GM12878 (cell line): ENCODE measurements at regions of chr2 and their contacts with region 1.

Region 1: DNA sequence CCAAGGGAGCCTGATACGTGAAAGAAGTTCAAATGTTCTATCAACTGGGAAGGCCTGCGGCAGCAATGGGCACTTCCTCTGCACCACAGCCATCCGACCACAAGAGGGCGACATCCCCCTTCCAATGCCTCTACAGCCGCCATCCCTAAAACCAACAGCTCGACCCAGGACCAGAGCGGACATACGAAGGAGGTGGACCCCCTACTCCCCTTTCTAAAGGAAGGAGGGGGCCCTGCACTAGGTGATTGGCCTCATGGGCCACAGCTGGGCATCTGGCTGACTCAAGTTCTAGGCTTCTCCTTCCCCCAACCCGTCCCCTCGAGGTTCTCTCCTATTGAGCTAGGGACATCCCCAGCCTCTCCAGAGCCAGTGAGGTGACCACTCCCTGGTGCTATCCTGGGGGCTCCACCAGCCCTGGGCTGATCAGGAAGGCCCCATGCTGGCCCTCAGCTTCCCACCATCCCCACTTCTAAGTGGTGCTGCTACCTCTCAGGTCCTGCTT is 217.2 kb downstream of the TNS1 start:
- DNase-seq: no peak
- ATAC-seq: peak; percentile 88
- H3K4me3 ChIP-seq: no peak overlapping the region
- H3K27ac ChIP-seq: no peak overlapping the region
- H3K4me1 ChIP-seq: peaks cover 3% of the 10 kb centered on the region; the same call in 1 of the 2 replicates
- H3K27me3 ChIP-seq: no peaks in the 10 kb centered on the region
- CTCF ChIP-seq: peak; percentile 95 to 98 (median 96)
- EP300 ChIP-seq: no peak
- POLR2A ChIP-seq: no peak
- RAD21 ChIP-seq: peak; percentile 85

Region 2: DNA sequence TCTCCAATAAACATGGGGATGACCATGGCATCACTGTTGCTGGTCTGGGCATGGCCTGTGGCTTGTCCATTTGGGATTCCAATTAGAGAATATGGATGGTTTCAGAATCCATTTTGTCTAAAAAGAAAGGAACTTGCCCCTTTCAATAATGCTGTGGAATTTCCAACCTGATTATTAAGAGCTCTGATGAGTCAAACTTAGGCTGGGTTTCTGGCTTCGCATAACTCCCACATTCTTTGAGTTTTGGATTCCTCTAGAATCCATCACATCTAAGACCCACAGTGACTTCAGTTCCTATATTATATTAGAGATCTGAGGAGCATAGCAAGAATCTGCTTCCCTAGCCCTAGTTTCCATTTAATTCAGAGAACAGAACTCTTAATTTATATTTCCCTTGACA is 314.3 kb before region 1 on chr2:
- CTCF ChIA-PET with region 1: no interaction called
- POLR2A ChIA-PET with region 1: no interaction called
- RAD21 ChIA-PET with region 1: no interaction called
- SMC1A ChIA-PET with region 1: no interaction called
- in situ Hi-C with region 1: no loop called
- intact Hi-C with region 1: no loop called
- DNase-seq: no peak
- ATAC-seq: no peak
- H3K4me3 ChIP-seq: no peak overlapping the region
- H3K27ac ChIP-seq: no peak overlapping the region
- H3K4me1 ChIP-seq: peaks cover 6% of the 10 kb centered on the region
- H3K27me3 ChIP-seq: no peaks in the 10 kb centered on the region; a peak in 2 of 4 replicates
- CTCF ChIP-seq: no peak
- EP300 ChIP-seq: no peak
- POLR2A ChIP-seq: no peak
- RAD21 ChIP-seq: no peak

Region 3: GRCh38 chr2:217643789-217644301 is 141.8 kb before region 1 on chr2:
- CTCF ChIA-PET with region 1: no interaction called
- POLR2A ChIA-PET with region 1: no interaction called
- RAD21 ChIA-PET with region 1: no interaction called
- SMC1A ChIA-PET with region 1: no interaction called
- in situ Hi-C with region 1: no loop called
- intact Hi-C with region 1: no loop called
- DNase-seq: no peak
- ATAC-seq: no peak
- H3K4me3 ChIP-seq: no peak overlapping the region
- H3K27ac ChIP-seq: no peak overlapping the region
- H3K4me1 ChIP-seq: no peaks in the 10 kb centered on the region
- H3K27me3 ChIP-seq: no peaks in the 10 kb centered on the region; a peak in 1 of 4 replicates
- CTCF ChIP-seq: no peak
- EP300 ChIP-seq: no peak
- POLR2A ChIP-seq: no peak
- RAD21 ChIP-seq: no peak

Region 4: DNA sequence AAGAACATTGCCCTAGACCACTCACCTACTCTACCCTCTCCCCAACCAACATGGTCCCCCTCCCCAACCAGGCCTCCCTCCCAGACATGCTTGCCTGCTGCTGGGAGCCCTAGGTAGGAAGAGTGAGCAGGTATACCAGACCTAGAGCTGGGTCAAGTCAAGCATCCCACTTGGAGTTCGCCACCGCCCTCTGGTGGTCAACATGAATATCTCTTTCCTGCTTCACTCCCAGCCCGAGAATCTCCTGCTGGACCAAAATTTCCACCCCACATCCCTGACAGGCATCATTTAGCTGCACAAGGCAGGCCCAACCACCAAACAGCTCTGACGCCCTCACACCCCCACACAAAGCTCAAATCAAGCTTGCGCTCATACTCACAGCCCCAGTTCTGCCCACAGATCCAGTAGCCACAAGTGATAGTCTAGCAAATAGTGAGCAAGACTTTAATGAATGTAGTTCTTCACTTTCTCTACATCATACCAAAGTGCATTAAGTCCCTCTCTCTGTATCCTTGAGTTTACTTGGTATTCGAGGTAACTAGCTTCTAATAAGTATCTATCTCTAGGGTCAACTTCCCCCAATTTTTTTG is 101.2 kb after region 1 on chr2:
- CTCF ChIA-PET with region 1: interaction called, 86 read pairs
- POLR2A ChIA-PET with region 1: no interaction called
- RAD21 ChIA-PET with region 1: interaction called, 24 read pairs
- SMC1A ChIA-PET with region 1: interaction called, 30 read pairs
- in situ Hi-C with region 1: loop called (anchors 5 kb)
- intact Hi-C with region 1: loop called (anchors 1 kb)
- DNase-seq: no peak
- ATAC-seq: peak; percentile 96
- H3K4me3 ChIP-seq: no peak overlapping the region
- H3K27ac ChIP-seq: no peak overlapping the region
- H3K4me1 ChIP-seq: no peaks in the 10 kb centered on the region
- H3K27me3 ChIP-seq: peaks cover 0 to 2% of the 10 kb centered on the region in 2 experiments; a peak in 2 of 4 replicates
- CTCF ChIP-seq: peak; percentile 75 to 79 (median 76)
- EP300 ChIP-seq: no peak
- POLR2A ChIP-seq: no peak
- RAD21 ChIP-seq: peak; percentile 67

Region 5: GRCh38 chr2:217988014-217988839 is 202.6 kb after region 1 on chr2:
- CTCF ChIA-PET with region 1: interaction called, 40 read pairs
- POLR2A ChIA-PET with region 1: no interaction called
- RAD21 ChIA-PET with region 1: interaction called, 9 read pairs
- SMC1A ChIA-PET with region 1: interaction called, 3 read pairs
- in situ Hi-C with region 1: loop called (anchors 5 kb)
- intact Hi-C with region 1: loop called (anchors 1 kb)
- DNase-seq: no peak
- ATAC-seq: peak; percentile 94
- H3K4me3 ChIP-seq: no peak overlapping the region
- H3K27ac ChIP-seq: no peak overlapping the region
- H3K4me1 ChIP-seq: no peaks in the 10 kb centered on the region
- H3K27me3 ChIP-seq: no peaks in the 10 kb centered on the region; a peak in 1 of 4 replicates
- CTCF ChIP-seq: peak; percentile 78 to 82 (median 81)
- EP300 ChIP-seq: no peak
- POLR2A ChIP-seq: no peak
- RAD21 ChIP-seq: peak; percentile 83

Region 6: DNA sequence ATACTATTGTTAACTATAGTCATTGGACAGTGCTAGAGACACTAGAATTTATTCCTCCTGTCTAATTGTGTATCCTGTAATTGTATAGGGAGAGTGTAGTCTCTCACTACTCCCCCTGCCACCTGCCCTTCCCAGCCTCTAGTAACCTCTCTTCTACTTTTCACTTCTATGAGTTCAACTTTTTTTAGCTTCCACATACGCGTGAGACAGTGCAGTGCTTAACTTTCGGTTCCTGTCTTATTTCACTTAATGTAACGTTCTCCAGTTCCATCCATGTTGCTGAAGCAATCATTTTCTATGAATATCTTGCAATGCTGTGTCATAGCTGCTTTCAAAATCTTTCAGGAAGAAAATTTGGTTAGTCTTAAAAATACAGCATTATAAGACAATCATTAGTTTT is 260.6 kb after region 1 on chr2:
- CTCF ChIA-PET with region 1: interaction called, 13 read pairs
- POLR2A ChIA-PET with region 1: no interaction called
- RAD21 ChIA-PET with region 1: interaction called, 4 read pairs
- SMC1A ChIA-PET with region 1: no interaction called
- in situ Hi-C with region 1: no loop called
- intact Hi-C with region 1: no loop called
- DNase-seq: peak; percentile 70
- ATAC-seq: peak; percentile 94
- H3K4me3 ChIP-seq: no peak overlapping the region
- H3K27ac ChIP-seq: peak overlapping the region; percentile 81
- H3K4me1 ChIP-seq: peaks cover 21% of the 10 kb centered on the region; the same call in 1 of the 2 replicates
- H3K27me3 ChIP-seq: no peaks in the 10 kb centered on the region
- CTCF ChIP-seq: no peak
- EP300 ChIP-seq: no peak
- POLR2A ChIP-seq: no peak
- RAD21 ChIP-seq: no peak

Region 7: GRCh38 chr2:218074031-218074430 is 288.4 kb after region 1 on chr2:
- CTCF ChIA-PET with region 1: interaction called, 16 read pairs
- POLR2A ChIA-PET with region 1: no interaction called
- RAD21 ChIA-PET with region 1: interaction called, 13 read pairs
- SMC1A ChIA-PET with region 1: interaction called, 6 read pairs
- in situ Hi-C with region 1: loop called (anchors 5 kb)
- intact Hi-C with region 1: no loop called
- DNase-seq: no peak
- ATAC-seq: peak; percentile 62
- H3K4me3 ChIP-seq: no peak overlapping the region
- H3K27ac ChIP-seq: no peak overlapping the region
- H3K4me1 ChIP-seq: peaks cover 4% of the 10 kb centered on the region; the same call in 1 of the 2 replicates
- H3K27me3 ChIP-seq: no peaks in the 10 kb centered on the region
- CTCF ChIP-seq: peak; percentile 46 to 68 (median 60)
- EP300 ChIP-seq: no peak
- POLR2A ChIP-seq: no peak
- RAD21 ChIP-seq: peak; percentile 21; the same call in 1 of the 2 replicates